Activated T-helper 1 cell treated with anti-CD3 and anti-CD28 coated beads, Interleukin-12 subunit alpha, Interleukin-12 subunit beta, Interleukin-2, Interleukin-4 antibody, amounts not matched to agents 30 ng/mL and 10 ng/mL and 1 ng/mL, durations not matched to agents 14 hours and 24 hours and 36 hours (primary cell): ENCODE measurements at regions of chr21 and their contacts with region 1.

Region 1: GRCh38 chr21:25487046-25487594 is 120.2 kb downstream of the MRPL39 start:
- DNase-seq: no peak
- H3K4me3 Mint-ChIP-seq: peak overlapping the region; percentile 47
- H3K27ac Mint-ChIP-seq: peak overlapping the region; percentile 85
- H3K4me1 Mint-ChIP-seq: peaks cover 60% of the 10 kb centered on the region
- H3K27me3 Mint-ChIP-seq: no peaks in the 10 kb centered on the region

Region 2: DNA sequence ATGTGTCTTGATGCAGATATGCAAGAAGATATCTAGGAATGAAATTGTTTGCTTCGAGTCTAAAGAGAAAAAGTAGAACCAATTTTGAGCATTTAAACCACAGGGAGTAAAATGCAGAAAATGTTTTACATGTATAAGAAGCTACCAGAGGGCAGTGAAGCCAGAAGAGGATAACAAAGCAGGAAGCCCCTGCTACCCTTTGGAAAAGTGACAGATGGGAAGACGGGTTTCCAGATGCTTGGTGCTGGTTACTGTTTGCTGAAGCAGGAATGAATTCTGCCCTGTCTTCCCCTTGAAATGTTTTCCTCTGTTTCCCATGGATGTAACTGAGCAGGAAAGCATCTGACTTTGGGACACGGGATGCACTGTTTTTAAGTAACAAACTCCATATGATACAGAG is 702.1 kb before region 1 on chr21:
- intact Hi-C with region 1: no loop called
- DNase-seq: no peak
- H3K4me3 Mint-ChIP-seq: no peak overlapping the region
- H3K27ac Mint-ChIP-seq: no peak overlapping the region
- H3K4me1 Mint-ChIP-seq: no peaks in the 10 kb centered on the region
- H3K27me3 Mint-ChIP-seq: no peaks in the 10 kb centered on the region

Region 3: GRCh38 chr21:25421327-25422028 is 65.6 kb before region 1 on chr21:
- intact Hi-C with region 1: loop called (anchors 1 kb)
- DNase-seq: peak; percentile 60
- H3K4me3 Mint-ChIP-seq: peak overlapping the region; percentile 77
- H3K27ac Mint-ChIP-seq: peak overlapping the region; percentile 77
- H3K4me1 Mint-ChIP-seq: peaks cover 46% of the 10 kb centered on the region
- H3K27me3 Mint-ChIP-seq: peaks cover 2% of the 10 kb centered on the region

Region 4: DNA sequence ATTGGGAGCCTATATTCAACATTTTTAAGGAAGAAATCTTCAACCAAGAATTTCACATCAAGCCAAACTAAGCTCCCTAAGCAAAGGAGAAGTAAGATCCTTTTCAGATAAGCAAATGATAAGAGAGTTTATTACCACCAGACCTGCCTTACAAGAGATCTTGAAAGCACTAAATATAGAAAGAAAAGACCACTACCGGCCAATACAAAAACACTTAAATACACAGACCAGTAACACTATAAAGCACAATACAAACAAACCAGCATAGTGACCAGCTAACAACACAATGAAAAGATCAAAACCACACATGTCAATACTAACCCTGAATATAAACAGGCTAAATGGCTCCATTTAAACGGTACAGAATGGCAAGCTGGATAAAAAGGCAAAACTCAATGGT is 45.3 kb before region 1 on chr21:
- intact Hi-C with region 1: no loop called
- DNase-seq: no peak
- H3K4me3 Mint-ChIP-seq: no peak overlapping the region
- H3K27ac Mint-ChIP-seq: no peak overlapping the region
- H3K4me1 Mint-ChIP-seq: no peaks in the 10 kb centered on the region
- H3K27me3 Mint-ChIP-seq: no peaks in the 10 kb centered on the region

Region 5: DNA sequence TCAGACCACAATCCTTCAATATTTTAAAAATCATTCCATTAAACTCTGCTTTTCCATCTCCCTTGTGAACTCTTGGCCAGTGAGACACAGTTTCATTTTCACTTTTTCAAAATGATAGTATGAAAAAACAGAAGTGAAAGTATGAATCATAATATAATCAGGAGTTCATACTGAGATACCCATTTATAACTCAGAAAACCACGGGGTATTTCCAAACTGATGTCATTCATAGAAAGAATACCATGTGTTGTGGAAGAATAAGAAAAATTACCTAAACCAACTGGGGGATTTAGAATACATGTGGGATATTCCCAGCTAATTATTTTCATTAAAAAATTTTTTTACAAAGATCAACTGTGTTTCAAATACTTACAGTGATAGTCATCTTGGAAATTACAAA is 29.7 kb before region 1 on chr21:
- intact Hi-C with region 1: loop called (anchors 1 kb)
- DNase-seq: no peak
- H3K4me3 Mint-ChIP-seq: peak overlapping the region; percentile 61
- H3K27ac Mint-ChIP-seq: peak overlapping the region; percentile 88
- H3K4me1 Mint-ChIP-seq: peaks cover 71% of the 10 kb centered on the region
- H3K27me3 Mint-ChIP-seq: no peaks in the 10 kb centered on the region

Region 6: GRCh38 chr21:25501996-25502665 is 15.0 kb after region 1 on chr21:
- intact Hi-C with region 1: loop called (anchors 1 kb)
- DNase-seq: no peak
- H3K4me3 Mint-ChIP-seq: no peak overlapping the region
- H3K27ac Mint-ChIP-seq: peak overlapping the region; percentile 84
- H3K4me1 Mint-ChIP-seq: peaks cover 21% of the 10 kb centered on the region
- H3K27me3 Mint-ChIP-seq: no peaks in the 10 kb centered on the region

Region 7: GRCh38 chr21:25561668-25562641 is 74.8 kb after region 1 on chr21:
- intact Hi-C with region 1: loop called (anchors 1 kb)
- DNase-seq: peak; percentile 68
- H3K4me3 Mint-ChIP-seq: peak overlapping the region; percentile 98
- H3K27ac Mint-ChIP-seq: peak overlapping the region; percentile 98
- H3K4me1 Mint-ChIP-seq: peaks cover 69% of the 10 kb centered on the region
- H3K27me3 Mint-ChIP-seq: no peaks in the 10 kb centered on the region